CD8-positive, alpha-beta T cell (primary cell): ENCODE measurements at regions of chr9 and their contacts with region 1.

Region 1: GRCh38 chr9:75389101-75389500 is 300.8 kb downstream of the OSTF1 start:
- DNase-seq: no peak
- ATAC-seq: no peak
- H3K4me3 ChIP-seq: no peak overlapping the region
- H3K4me3 Mint-ChIP-seq: no peak overlapping the region
- H3K27ac ChIP-seq: no peak overlapping the region
- H3K27ac Mint-ChIP-seq: no peak overlapping the region
- H3K4me1 ChIP-seq: no peaks in the 10 kb centered on the region
- H3K4me1 Mint-ChIP-seq: no peaks in the 10 kb centered on the region
- H3K27me3 ChIP-seq: no peaks in the 10 kb centered on the region
- H3K27me3 Mint-ChIP-seq: peaks cover 3% of the 10 kb centered on the region
- CTCF ChIP-seq: no peak

Region 2: GRCh38 chr9:74172874-74173273 is 1216.2 kb before region 1 on chr9:
- CTCF ChIA-PET with region 1: no interaction called
- POLR2A ChIA-PET with region 1: no interaction called
- intact Hi-C with region 1: no loop called
- DNase-seq: no peak
- ATAC-seq: no peak
- H3K4me3 ChIP-seq: no peak overlapping the region
- H3K4me3 Mint-ChIP-seq: no peak overlapping the region
- H3K27ac ChIP-seq: no peak overlapping the region
- H3K27ac Mint-ChIP-seq: no peak overlapping the region
- H3K4me1 ChIP-seq: no peaks in the 10 kb centered on the region
- H3K4me1 Mint-ChIP-seq: peaks cover 2% of the 10 kb centered on the region
- H3K27me3 ChIP-seq: no peaks in the 10 kb centered on the region
- H3K27me3 Mint-ChIP-seq: no peaks in the 10 kb centered on the region
- CTCF ChIP-seq: no peak

Region 3: GRCh38 chr9:75410405-75410804 is 21.3 kb after region 1 on chr9:
- CTCF ChIA-PET with region 1: no interaction called
- POLR2A ChIA-PET with region 1: no interaction called
- intact Hi-C with region 1: loop called in 1 of 2 experiments (anchors 1 kb)
- DNase-seq: no peak
- ATAC-seq: no peak
- H3K4me3 ChIP-seq: no peak overlapping the region
- H3K4me3 Mint-ChIP-seq: no peak overlapping the region
- H3K27ac ChIP-seq: no peak overlapping the region
- H3K27ac Mint-ChIP-seq: no peak overlapping the region
- H3K4me1 ChIP-seq: no peaks in the 10 kb centered on the region
- H3K4me1 Mint-ChIP-seq: no peaks in the 10 kb centered on the region
- H3K27me3 ChIP-seq: no peaks in the 10 kb centered on the region
- H3K27me3 Mint-ChIP-seq: peaks cover 13% of the 10 kb centered on the region
- CTCF ChIP-seq: no peak

Region 4: GRCh38 chr9:75455444-75455921 is 66.4 kb after region 1 on chr9:
- CTCF ChIA-PET with region 1: no interaction called
- POLR2A ChIA-PET with region 1: no interaction called
- intact Hi-C with region 1: loop called in 1 of 2 experiments (anchors 10 kb)
- DNase-seq: no peak
- ATAC-seq: no peak
- H3K4me3 ChIP-seq: no peak overlapping the region
- H3K4me3 Mint-ChIP-seq: no peak overlapping the region
- H3K27ac ChIP-seq: no peak overlapping the region
- H3K27ac Mint-ChIP-seq: no peak overlapping the region
- H3K4me1 ChIP-seq: no peaks in the 10 kb centered on the region
- H3K4me1 Mint-ChIP-seq: no peaks in the 10 kb centered on the region
- H3K27me3 ChIP-seq: no peaks in the 10 kb centered on the region
- H3K27me3 Mint-ChIP-seq: peaks cover 3% of the 10 kb centered on the region
- CTCF ChIP-seq: no peak